Activated CD8-positive, alpha-beta T cell treated with anti-CD3 and anti-CD28 coated beads for 36 hours (primary cell): ENCODE measurements at regions of chr1 and their contacts with region 1.

Region 1: DNA sequence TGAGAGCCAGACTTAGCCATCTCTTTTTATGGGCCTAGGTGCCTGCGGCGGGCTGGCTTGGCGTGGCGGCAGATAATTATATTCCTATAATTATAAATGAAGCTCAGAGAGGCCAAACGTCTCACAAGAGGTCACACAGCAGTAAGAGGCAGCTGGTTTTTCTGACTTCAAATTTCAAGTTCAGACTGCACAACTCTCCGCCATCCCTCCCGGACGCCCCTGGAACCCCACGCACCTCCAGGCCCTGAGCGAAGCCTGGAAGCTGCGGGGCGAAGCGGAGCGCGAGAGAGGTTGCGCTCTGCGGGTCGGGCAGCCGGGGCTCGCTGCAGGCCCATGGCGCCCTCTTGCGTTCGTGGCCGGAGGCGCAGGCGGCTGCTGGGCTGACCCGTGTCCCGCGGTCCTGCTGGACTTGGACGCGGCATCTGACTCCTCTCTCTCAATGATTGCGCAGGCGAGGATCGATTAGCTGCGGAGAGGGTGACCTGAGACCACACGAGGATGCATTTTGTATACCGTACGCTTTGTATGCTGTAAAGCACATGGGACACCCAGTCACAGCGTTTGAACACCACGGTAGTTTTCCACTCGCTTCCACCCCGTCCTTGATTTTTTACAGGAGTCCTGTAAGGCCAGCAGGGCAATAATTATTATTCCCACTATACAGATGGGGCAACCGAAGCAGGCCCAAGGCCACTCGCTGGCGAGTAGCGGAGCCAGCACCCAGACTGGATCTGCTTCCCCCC is 272.7 kb downstream of the FOXD2 start:
- DNase-seq: peak; percentile 75
- ATAC-seq: peak; percentile 86
- H3K4me3 Mint-ChIP-seq: no peak overlapping the region
- H3K27ac Mint-ChIP-seq: no peak overlapping the region
- H3K4me1 Mint-ChIP-seq: peaks cover 10% of the 10 kb centered on the region
- H3K27me3 Mint-ChIP-seq: peaks cover 60% of the 10 kb centered on the region
- CTCF ChIP-seq: peak; percentile 99

Region 2: GRCh38 chr1:47388891-47389238 is 321.6 kb before region 1 on chr1:
- CTCF ChIA-PET with region 1: interaction called, 29 read pairs
- POLR2A ChIA-PET with region 1: no interaction called
- intact Hi-C with region 1: no loop called
- DNase-seq: peak; percentile 73
- ATAC-seq: peak; percentile 89
- H3K4me3 Mint-ChIP-seq: no peak overlapping the region
- H3K27ac Mint-ChIP-seq: no peak overlapping the region
- H3K4me1 Mint-ChIP-seq: no peaks in the 10 kb centered on the region
- H3K27me3 Mint-ChIP-seq: no peaks in the 10 kb centered on the region
- CTCF ChIP-seq: peak; percentile 65

Region 3: DNA sequence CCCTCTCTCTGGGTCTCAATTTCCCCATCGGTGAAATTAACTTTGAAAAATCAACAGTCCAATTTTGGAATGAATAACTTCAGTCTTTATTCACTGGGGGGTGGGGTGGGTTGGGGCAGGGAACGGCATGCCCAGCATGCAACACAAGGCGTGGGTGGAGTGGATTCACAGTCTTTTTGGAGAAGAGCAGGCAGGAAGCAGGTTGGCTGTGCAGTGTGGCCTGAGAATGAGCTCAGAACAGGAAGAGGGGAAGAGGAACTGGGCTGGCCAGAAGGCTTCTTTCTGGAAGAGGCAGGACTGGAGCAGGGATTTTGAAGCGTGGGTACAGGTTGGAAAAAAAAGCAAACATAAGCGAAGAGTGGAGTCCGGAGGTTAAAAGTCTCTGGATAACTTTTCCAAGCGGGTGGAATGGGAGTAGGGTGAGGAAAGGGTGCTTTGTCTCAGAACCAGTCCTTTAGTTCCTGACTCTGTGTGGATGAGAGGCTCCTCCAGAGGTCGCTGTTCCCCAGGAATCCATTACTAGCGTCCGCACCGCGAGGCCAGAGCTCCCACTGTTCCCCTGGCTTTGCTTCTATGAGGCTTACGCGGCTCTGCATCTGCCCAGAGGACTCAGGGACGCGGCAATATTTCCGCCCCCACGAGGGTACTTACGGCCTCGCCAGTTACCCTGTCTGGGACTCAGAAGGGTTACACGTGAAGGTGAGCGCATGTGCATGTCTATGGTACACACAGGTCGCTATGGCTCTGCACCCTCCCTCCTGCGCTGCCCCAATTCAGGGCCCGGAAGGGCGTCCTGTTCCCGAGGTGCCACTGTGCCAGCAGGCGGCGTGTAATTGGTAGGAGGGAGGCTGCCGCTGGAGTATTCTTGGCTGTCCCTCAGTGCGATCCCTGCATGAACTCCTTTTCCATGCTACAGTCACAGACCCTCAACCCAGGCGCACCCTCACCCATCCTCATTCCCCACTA is 278.1 kb before region 1 on chr1:
- CTCF ChIA-PET with region 1: interaction called, 125 read pairs
- POLR2A ChIA-PET with region 1: interaction called, 3 read pairs
- intact Hi-C with region 1: loop called (anchors 2 kb)
- DNase-seq: peak; percentile 78
- ATAC-seq: peak; percentile 35
- H3K4me3 Mint-ChIP-seq: peak overlapping the region; percentile 43
- H3K27ac Mint-ChIP-seq: no peak overlapping the region
- H3K4me1 Mint-ChIP-seq: peaks cover 44% of the 10 kb centered on the region
- H3K27me3 Mint-ChIP-seq: peaks cover 38% of the 10 kb centered on the region
- CTCF ChIP-seq: peak; percentile 47

Region 4: DNA sequence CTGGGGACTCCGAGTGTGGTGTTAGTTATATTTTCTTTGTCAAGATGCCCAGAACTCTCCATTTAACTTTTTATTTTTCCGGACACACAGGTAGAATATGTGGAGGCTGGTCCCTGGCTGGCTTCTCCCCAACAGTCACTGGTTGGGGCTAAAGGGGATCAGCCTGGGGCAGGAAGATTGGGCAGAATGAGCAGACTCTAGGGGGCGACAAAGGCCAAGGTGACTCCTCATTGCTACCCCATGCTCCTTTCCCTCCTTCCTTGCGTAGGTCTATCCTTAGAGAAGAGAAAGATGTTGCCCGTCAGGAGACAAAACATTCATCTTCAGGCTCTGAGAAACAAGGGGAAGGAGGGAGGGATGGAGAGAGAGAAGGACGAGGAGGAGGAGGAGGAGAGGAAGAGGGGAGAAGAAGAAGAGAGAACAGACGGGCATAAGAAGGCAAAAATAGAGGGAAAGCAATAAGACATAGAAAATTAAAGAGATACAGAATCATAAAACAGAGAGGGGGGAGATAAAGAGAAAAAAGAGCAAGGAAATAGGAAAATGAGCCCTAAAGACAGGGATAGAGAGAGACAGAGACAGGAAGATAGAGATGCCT is 182.7 kb before region 1 on chr1:
- CTCF ChIA-PET with region 1: interaction called, 5 read pairs
- POLR2A ChIA-PET with region 1: no interaction called
- intact Hi-C with region 1: loop called (anchors 10 kb)
- DNase-seq: peak; percentile 31
- ATAC-seq: no peak
- H3K4me3 Mint-ChIP-seq: no peak overlapping the region
- H3K27ac Mint-ChIP-seq: no peak overlapping the region
- H3K4me1 Mint-ChIP-seq: no peaks in the 10 kb centered on the region
- H3K27me3 Mint-ChIP-seq: peaks cover 46% of the 10 kb centered on the region
- CTCF ChIP-seq: no peak

Region 5: GRCh38 chr1:47693115-47693514 is 17.4 kb before region 1 on chr1:
- CTCF ChIA-PET with region 1: no interaction called
- POLR2A ChIA-PET with region 1: no interaction called
- intact Hi-C with region 1: no loop called
- DNase-seq: no peak
- ATAC-seq: no peak
- H3K4me3 Mint-ChIP-seq: no peak overlapping the region
- H3K27ac Mint-ChIP-seq: no peak overlapping the region
- H3K4me1 Mint-ChIP-seq: no peaks in the 10 kb centered on the region
- H3K27me3 Mint-ChIP-seq: peaks cover 7% of the 10 kb centered on the region
- CTCF ChIP-seq: no peak

Region 6: GRCh38 chr1:47791879-47792608 is 81.5 kb after region 1 on chr1:
- CTCF ChIA-PET with region 1: no interaction called
- POLR2A ChIA-PET with region 1: no interaction called
- intact Hi-C with region 1: no loop called
- DNase-seq: no peak
- ATAC-seq: no peak
- H3K4me3 Mint-ChIP-seq: no peak overlapping the region
- H3K27ac Mint-ChIP-seq: no peak overlapping the region
- H3K4me1 Mint-ChIP-seq: no peaks in the 10 kb centered on the region
- H3K27me3 Mint-ChIP-seq: peaks cover 4% of the 10 kb centered on the region
- CTCF ChIP-seq: no peak